ENCODE measurements at regions of chr3 and their contacts with region 1.

Region 1: GRCh38 chr3:14415501-14415900 is 13.1 kb downstream of the SLC6A6 start:
- DNase-seq: peak; percentile 56
- H3K4me3 ChIP-seq: no peak overlapping the region
- H3K27me3 ChIP-seq: no peaks in the 10 kb centered on the region
- CTCF ChIP-seq: no peak

Region 2: GRCh38 chr3:13673209-13673608 is 742.3 kb before region 1 on chr3:
- CTCF ChIA-PET with region 1: no interaction called
- POLR2A ChIA-PET with region 1: no interaction called
- DNase-seq: no peak
- H3K4me3 ChIP-seq: no peak overlapping the region
- H3K27me3 ChIP-seq: no peaks in the 10 kb centered on the region; the same call in none of the 2 replicates
- CTCF ChIP-seq: peak; percentile 38; the same call in 1 of the 2 replicates

Region 3: DNA sequence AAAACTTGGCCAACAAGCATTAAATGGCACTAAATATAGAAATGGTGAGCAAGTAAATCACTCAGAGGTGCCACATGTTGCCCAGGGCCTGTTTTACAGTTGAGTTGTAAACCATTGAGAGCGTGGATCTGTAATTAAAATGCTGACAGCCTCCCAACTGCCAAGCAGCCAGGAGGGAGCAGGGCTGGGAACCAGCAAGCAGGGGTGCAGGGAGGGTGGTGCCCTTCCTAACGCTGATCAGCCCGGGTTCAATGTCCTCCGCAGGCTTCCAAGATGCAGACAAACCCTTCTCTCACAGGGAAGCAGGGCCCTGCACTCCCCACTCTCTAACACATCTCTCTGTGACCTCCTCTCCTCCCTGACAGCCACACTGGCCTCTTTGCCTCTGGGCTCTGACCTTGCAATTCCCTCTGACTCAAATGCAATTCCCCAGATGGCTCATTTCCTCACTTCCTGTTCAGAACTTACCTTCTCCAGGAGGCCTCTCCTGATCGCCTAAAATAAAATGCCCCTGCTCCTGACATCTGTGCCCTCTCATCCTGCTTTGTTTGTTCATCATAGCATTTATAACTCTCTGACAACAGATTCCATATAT is 575.7 kb before region 1 on chr3:
- CTCF ChIA-PET with region 1: no interaction called
- POLR2A ChIA-PET with region 1: no interaction called
- DNase-seq: no peak
- H3K4me3 ChIP-seq: no peak overlapping the region
- H3K27me3 ChIP-seq: no peaks in the 10 kb centered on the region
- CTCF ChIP-seq: no peak

Region 4: DNA sequence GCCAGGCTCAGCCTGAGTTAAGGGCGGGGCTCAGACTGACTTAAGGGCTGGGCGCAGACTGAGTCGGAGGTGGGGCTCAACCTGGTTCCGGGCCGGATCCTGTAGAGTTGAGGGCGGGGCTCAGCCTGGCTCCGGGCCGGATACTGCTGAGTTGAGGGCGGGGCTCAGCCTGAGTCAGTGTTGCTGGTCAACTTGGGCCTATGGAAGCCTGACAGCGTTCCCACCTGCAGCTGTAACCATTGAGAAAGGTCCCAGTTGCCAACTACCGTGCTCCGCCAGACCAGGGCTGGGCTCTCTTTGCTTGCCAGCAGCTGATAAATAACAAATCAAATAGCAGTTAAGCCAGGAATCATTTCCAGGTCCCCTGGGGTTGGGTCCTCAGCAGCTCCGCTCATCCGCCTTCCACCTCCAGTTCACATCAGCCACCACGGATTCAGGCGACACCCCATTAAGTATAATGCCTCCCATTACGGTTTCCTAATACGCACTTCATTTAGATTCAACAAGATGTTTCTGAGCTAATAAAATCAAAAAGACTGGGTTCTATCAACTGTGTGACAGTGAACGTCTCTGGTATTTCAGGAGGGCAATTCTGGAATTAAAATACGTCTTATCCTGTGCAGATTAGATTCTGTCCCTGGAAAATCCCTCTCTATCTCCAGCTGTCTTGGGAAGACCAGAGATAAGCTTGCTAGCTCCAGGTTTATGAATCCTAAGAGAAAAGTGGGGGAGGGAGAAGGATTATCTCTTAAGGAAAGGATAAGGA is 117.4 kb after region 1 on chr3:
- CTCF ChIA-PET with region 1: no interaction called
- POLR2A ChIA-PET with region 1: interaction called, 19 read pairs
- DNase-seq: no peak
- H3K4me3 ChIP-seq: no peak overlapping the region
- H3K27me3 ChIP-seq: peaks cover 4% of the 10 kb centered on the region; the same call in 1 of the 2 replicates
- CTCF ChIP-seq: no peak